Breast epithelium (tissue), 4 donors: ENCODE measurements at regions of chr1 and their contacts with region 1.

Region 1: DNA sequence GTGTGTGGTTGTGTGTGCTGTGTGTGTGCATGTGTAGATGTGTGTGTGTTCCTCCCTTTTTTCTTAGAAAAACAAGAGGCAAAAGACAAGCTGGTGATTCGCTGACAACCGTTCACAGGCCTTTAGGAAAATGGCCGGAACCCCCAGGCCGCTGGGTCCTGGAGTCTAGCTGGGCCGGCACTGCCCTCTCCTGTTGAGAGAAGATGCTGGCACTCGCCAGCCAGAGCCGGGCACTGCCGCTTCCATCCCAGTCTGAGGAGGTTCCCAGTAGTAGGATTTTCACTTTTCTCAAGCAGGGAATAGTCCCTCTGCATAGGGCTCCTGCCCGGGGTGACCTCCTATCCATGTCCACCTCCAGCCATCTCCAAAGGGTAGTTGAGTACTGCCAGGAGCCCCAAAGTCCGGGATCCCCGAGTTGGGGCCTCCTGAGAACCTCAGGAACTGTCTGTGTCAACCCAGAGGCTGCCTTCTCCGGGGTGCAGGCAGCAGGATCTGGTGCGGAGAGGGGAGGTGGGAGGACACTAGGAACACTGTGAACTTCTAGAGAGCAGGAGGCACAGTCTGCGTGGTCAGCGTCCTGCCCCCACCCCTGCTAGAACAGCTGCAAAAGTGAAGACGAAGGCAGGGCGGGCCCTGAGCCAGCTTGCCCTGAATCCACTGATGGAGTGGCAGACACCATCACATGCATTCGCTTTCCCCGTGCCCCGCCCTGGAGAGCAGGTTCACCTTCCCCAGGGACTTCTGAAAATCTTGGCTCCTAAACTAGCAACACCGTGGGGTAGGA is 44.1 kb upstream of the ARHGEF16 start:
- DNase-seq: peak in 1 of 2 donors; percentile 62
- H3K4me3 ChIP-seq: no peak overlapping the region
- H3K27ac ChIP-seq: no peak overlapping the region
- H3K4me1 ChIP-seq: no peaks in the 10 kb centered on the region
- H3K27me3 ChIP-seq: peaks cover 0 to 73% of the 10 kb centered on the region in 2 donors
- CTCF ChIP-seq: peak in 2 of 3 donors; percentile 19 to 41
- POLR2A ChIP-seq: no peak

Region 2: DNA sequence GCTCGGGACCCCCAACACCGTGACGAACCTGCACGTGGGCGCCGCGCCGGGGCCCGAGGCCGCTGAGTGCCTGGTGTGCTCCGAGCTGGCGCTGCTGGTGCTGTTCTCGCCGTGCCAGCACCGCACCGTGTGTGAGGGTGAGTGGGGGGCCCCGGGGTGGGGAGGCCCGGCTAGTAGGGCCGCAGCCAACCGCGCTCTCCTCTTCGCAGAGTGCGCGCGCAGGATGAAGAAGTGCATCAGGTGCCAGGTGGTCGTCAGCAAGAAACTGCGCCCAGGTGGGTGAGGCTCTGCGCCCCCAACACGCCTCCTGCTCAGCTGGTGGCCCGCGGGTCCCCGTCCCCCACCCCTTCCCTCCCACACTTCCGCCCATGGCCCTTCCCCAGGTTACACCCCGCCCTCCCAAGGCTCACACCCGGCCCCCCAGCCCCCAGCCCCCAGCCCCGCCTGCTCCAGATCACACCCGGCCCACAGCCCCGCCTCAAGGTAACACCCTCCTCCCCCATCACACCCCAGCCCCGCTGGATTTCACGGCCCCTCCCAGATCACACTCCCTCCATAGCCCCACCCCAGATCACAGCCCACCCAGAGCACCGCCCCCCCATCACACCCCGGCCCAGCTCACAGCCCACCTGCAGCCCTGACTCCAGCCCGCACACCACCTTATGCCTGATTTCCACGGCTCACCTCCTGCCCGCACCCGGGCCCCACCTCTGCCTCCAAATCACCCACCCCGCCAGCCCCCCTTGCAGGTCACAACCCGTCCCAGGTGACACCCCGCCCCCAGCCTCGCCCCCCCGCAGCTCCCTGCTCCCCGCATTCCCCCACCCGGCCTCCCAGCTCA is 1780.7 kb before region 1 on chr1:
- intact Hi-C with region 1: loop called (anchors 5 kb)
- DNase-seq: no peak
- H3K4me3 ChIP-seq: peak overlapping the region in 2 of 3 donors; percentile 38 to 64
- H3K27ac ChIP-seq: peak overlapping the region in 1 of 2 donors; percentile 91
- H3K4me1 ChIP-seq: peaks cover 0 to 5% of the 10 kb centered on the region in 2 donors
- H3K27me3 ChIP-seq: peaks cover 7 to 20% of the 10 kb centered on the region in 2 donors
- CTCF ChIP-seq: no peak
- POLR2A ChIP-seq: no peak

Region 3: GRCh38 chr1:2628191-2628932 is 782.0 kb before region 1 on chr1:
- intact Hi-C with region 1: loop called (anchors 5 kb)
- DNase-seq: peak in 1 of 2 donors; percentile 46
- H3K4me3 ChIP-seq: peak overlapping the region in 2 of 3 donors; percentile 13 to 57
- H3K27ac ChIP-seq: no peak overlapping the region
- H3K4me1 ChIP-seq: peaks cover 0 to 7% of the 10 kb centered on the region in 2 donors
- H3K27me3 ChIP-seq: peaks cover 9 to 74% of the 10 kb centered on the region in 2 donors
- CTCF ChIP-seq: no peak
- POLR2A ChIP-seq: no peak

Region 4: GRCh38 chr1:3012456-3013291 is 397.7 kb before region 1 on chr1:
- intact Hi-C with region 1: loop called (anchors 10 kb)
- DNase-seq: peak; percentile 19 to 53
- H3K4me3 ChIP-seq: no peak overlapping the region
- H3K27ac ChIP-seq: no peak overlapping the region
- H3K4me1 ChIP-seq: no peaks in the 10 kb centered on the region
- H3K27me3 ChIP-seq: peaks cover 0 to 85% of the 10 kb centered on the region in 2 donors
- CTCF ChIP-seq: peak in 2 of 3 donors; percentile 43 to 47
- POLR2A ChIP-seq: no peak

Region 5: GRCh38 chr1:4150262-4150661 is 739.9 kb after region 1 on chr1:
- intact Hi-C with region 1: no loop called
- DNase-seq: no peak
- H3K4me3 ChIP-seq: no peak overlapping the region
- H3K27ac ChIP-seq: no peak overlapping the region
- H3K4me1 ChIP-seq: no peaks in the 10 kb centered on the region
- H3K27me3 ChIP-seq: no peaks in the 10 kb centered on the region
- CTCF ChIP-seq: no peak
- POLR2A ChIP-seq: no peak